Heart left ventricle (tissue), 16 donors: ENCODE measurements at regions of chr3 and their contacts with region 1.

Region 1: DNA sequence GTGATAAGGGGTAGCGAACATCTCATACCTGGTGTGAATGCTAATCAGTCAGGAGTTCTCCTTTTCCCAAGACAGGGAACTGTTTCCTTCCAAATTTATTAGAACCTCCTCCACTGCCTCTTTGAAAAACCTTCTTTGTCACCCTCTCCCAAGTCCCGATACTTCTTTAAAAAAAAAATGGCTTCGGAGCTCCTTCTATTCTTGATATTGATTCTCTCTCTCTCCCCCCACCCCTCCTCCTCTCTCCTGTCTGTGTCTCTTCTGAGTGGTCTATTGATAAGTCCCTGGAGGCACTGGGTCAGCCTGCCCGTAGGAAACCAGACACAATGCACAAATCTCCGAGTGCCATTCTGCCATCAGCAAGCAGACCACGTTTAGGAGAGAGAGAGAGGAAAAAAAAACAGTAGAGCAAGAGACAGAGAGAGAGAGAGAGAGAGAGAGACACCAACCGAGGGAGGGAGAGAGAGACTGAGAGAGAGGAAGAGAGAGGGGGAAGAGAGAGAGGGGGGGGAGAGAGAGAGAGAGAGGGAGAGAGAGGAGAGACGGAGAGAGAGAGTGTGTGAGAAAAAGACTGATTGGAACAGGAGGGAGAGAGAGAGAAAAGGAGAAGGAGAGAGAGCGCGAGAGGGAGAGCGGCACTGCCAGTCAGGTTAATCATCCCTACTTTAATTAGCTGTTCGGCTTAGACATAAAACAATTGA is 160.9 kb downstream of the TIGIT start:
- DNase-seq: peak in 2 of 5 donors; percentile 21 to 24
- ATAC-seq: peak; percentile 19 to 53 (median 50)
- H3K4me3 ChIP-seq: peak overlapping the region in 11 of 12 donors; percentile 32 to 66 (median 53)
- H3K27ac ChIP-seq: peak overlapping the region; percentile 53 to 87 (median 72)
- H3K4me1 ChIP-seq: peaks cover 10 to 79% (median 43%) of the 10 kb centered on the region in 12 donors
- H3K27me3 ChIP-seq: no peaks in the 10 kb centered on the region
- CTCF ChIP-seq: no peak
- POLR2A ChIP-seq: no peak

Region 2: GRCh38 chr3:114418724-114419543 is 35.8 kb before region 1 on chr3:
- intact Hi-C with region 1: loop called in 2 of 10 experiments (anchors 5 kb)
- DNase-seq: no peak
- ATAC-seq: peak; percentile 53 to 84 (median 82)
- H3K4me3 ChIP-seq: peak overlapping the region in 6 of 12 donors; percentile 11 to 39 (median 34)
- H3K27ac ChIP-seq: peak overlapping the region in 11 of 12 donors; percentile 6 to 78 (median 52)
- H3K4me1 ChIP-seq: peaks cover 0 to 65% (median 29%) of the 10 kb centered on the region in 12 donors
- H3K27me3 ChIP-seq: no peaks in the 10 kb centered on the region
- CTCF ChIP-seq: peak; percentile 78 to 92 (median 89)
- POLR2A ChIP-seq: no peak

Region 3: GRCh38 chr3:114519415-114519814 is 64.7 kb after region 1 on chr3:
- intact Hi-C with region 1: loop called in 1 of 10 experiments (anchors 2 kb)
- DNase-seq: peak in 2 of 5 donors; percentile 16 to 33
- ATAC-seq: peak; percentile 57 to 84 (median 82)
- H3K4me3 ChIP-seq: no peak overlapping the region
- H3K27ac ChIP-seq: peak overlapping the region in 2 of 12 donors; percentile 2 to 16
- H3K4me1 ChIP-seq: peaks cover 0 to 45% (median 22%) of the 10 kb centered on the region in 12 donors
- H3K27me3 ChIP-seq: no peaks in the 10 kb centered on the region
- CTCF ChIP-seq: no peak
- POLR2A ChIP-seq: no peak